CD8-positive, alpha-beta T cell (primary cell): ENCODE measurements at regions of chr16 and their contacts with region 1.

Region 1: GRCh38 chr16:68264128-68265077 is at the start of gene SLC7A6:
- DNase-seq: peak; percentile 66 to 90 (median 80)
- ATAC-seq: peak; percentile 67
- H3K4me3 ChIP-seq: peak within 1 kb of the TSS; percentile 83 to 88
- H3K4me3 Mint-ChIP-seq: peak within 1 kb of the TSS; percentile 96
- H3K27ac ChIP-seq: peak within 1 kb of the TSS; percentile 78 to 99
- H3K27ac Mint-ChIP-seq: peak within 1 kb of the TSS; percentile 99
- H3K4me1 ChIP-seq: peaks cover 54% of the 10 kb centered on the region
- H3K4me1 Mint-ChIP-seq: peaks cover 50% of the 10 kb centered on the region
- H3K27me3 ChIP-seq: no peaks in the 10 kb centered on the region
- H3K27me3 Mint-ChIP-seq: no peaks in the 10 kb centered on the region
- CTCF ChIP-seq: peak; percentile 59
- total RNA-seq, gene SLC7A6: 115 to 119 TPM

Region 2: GRCh38 chr16:68237243-68238028 is 27.0 kb before region 1 on chr16:
- CTCF ChIA-PET with region 1: interaction called, 57 read pairs
- POLR2A ChIA-PET with region 1: interaction called, 5 read pairs
- intact Hi-C with region 1: no loop called
- DNase-seq: peak; percentile 61 to 92 (median 86)
- ATAC-seq: peak; percentile 80
- H3K4me3 ChIP-seq: peak overlapping the region; percentile 67 to 93
- H3K4me3 Mint-ChIP-seq: peak overlapping the region; percentile 95
- H3K27ac ChIP-seq: peak overlapping the region; percentile 35 to 51
- H3K27ac Mint-ChIP-seq: peak overlapping the region; percentile 86
- H3K4me1 ChIP-seq: peaks cover 32% of the 10 kb centered on the region
- H3K4me1 Mint-ChIP-seq: peaks cover 32% of the 10 kb centered on the region
- H3K27me3 ChIP-seq: no peaks in the 10 kb centered on the region
- H3K27me3 Mint-ChIP-seq: no peaks in the 10 kb centered on the region
- CTCF ChIP-seq: no peak

Region 3: DNA sequence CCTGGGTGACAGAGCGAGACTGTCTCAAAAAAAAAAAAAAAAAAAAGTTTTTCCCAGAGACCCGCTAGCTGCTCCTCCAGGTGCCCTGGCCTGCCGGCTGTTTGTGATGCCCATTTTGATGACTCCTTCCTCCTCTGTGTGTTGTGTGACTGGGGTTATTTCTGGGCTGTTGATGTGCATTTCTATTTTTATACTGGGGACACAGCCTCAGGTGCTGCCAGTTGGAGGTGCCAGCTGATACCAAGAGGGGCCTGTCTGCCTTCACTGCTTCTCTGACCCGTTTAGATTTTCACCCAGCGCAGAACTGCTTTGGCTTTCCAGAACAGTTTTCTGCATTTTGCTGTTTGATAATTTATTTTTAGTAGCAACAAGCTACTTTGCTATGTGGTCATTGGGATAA is 12.6 kb before region 1 on chr16:
- CTCF ChIA-PET with region 1: interaction called, 57 read pairs
- POLR2A ChIA-PET with region 1: interaction called, 10 read pairs
- intact Hi-C with region 1: no loop called
- DNase-seq: no peak
- ATAC-seq: no peak
- H3K4me3 ChIP-seq: no peak overlapping the region
- H3K4me3 Mint-ChIP-seq: no peak overlapping the region
- H3K27ac ChIP-seq: no peak overlapping the region
- H3K27ac Mint-ChIP-seq: no peak overlapping the region
- H3K4me1 ChIP-seq: peaks cover 2% of the 10 kb centered on the region
- H3K4me1 Mint-ChIP-seq: peaks cover 2% of the 10 kb centered on the region
- H3K27me3 ChIP-seq: no peaks in the 10 kb centered on the region
- H3K27me3 Mint-ChIP-seq: no peaks in the 10 kb centered on the region
- CTCF ChIP-seq: no peak

Region 4: DNA sequence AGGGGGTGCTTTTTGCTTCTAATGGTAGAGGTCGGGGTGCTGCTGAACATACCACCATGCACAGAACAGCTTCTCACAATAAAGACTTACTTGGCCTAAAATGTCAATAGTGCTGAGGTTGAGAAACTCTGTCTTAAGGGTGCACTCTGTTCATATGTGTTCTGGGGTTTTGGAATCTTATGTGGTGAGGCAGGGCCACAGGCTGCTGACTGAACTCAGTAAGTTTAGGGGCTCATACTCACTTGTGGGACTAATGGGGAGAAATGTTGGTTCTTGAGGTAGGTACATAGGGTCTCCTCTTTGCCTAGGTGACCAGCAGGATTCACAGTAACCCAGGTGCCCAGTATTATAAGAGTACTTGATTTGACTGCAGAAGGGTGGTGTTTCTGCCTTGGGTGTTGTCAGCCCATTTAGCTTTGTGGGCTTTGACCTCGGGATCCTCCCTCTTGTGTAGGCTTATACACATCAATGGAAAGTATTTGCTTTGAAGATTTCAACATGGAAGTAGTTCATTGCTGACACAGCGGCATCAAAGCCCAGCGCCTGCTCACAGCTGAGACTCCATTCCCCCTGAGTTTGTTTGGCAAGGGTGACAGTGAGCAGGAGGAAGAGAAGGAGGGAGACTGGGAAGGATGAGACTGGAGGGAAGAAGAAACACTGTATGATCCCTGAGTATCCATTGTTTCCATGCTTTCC is 17.1 kb after region 1 on chr16:
- CTCF ChIA-PET with region 1: interaction called, 332 read pairs
- POLR2A ChIA-PET with region 1: interaction called, 88 read pairs
- intact Hi-C with region 1: loop called (anchors 2 kb)
- DNase-seq: peak in 6 of 9 experiments; percentile 25 to 64 (median 40)
- ATAC-seq: peak; percentile 51
- H3K4me3 ChIP-seq: peak overlapping the region in 1 of 2 experiments; percentile 5
- H3K4me3 Mint-ChIP-seq: peak overlapping the region; percentile 66
- H3K27ac ChIP-seq: peak overlapping the region; percentile 1 to 33
- H3K27ac Mint-ChIP-seq: peak overlapping the region; percentile 88
- H3K4me1 ChIP-seq: peaks cover 79% of the 10 kb centered on the region
- H3K4me1 Mint-ChIP-seq: peaks cover 72% of the 10 kb centered on the region
- H3K27me3 ChIP-seq: no peaks in the 10 kb centered on the region
- H3K27me3 Mint-ChIP-seq: no peaks in the 10 kb centered on the region
- CTCF ChIP-seq: no peak

Region 5: GRCh38 chr16:68298907-68299561 is 34.6 kb after region 1 on chr16:
- CTCF ChIA-PET with region 1: interaction called, 332 read pairs
- POLR2A ChIA-PET with region 1: interaction called, 5 read pairs
- intact Hi-C with region 1: no loop called
- DNase-seq: no peak
- ATAC-seq: no peak
- H3K4me3 ChIP-seq: no peak overlapping the region
- H3K4me3 Mint-ChIP-seq: no peak overlapping the region
- H3K27ac ChIP-seq: no peak overlapping the region
- H3K27ac Mint-ChIP-seq: peak overlapping the region; percentile 55
- H3K4me1 ChIP-seq: no peaks in the 10 kb centered on the region
- H3K4me1 Mint-ChIP-seq: peaks cover 29% of the 10 kb centered on the region
- H3K27me3 ChIP-seq: no peaks in the 10 kb centered on the region
- H3K27me3 Mint-ChIP-seq: no peaks in the 10 kb centered on the region
- CTCF ChIP-seq: no peak

Region 6: GRCh38 chr16:68328151-68328859 is 63.9 kb after region 1 on chr16:
- CTCF ChIA-PET with region 1: interaction called, 618 read pairs
- POLR2A ChIA-PET with region 1: interaction called, 19 read pairs
- intact Hi-C with region 1: loop called (anchors 1 kb)
- DNase-seq: peak; percentile 59 to 90 (median 77)
- ATAC-seq: peak; percentile 100
- H3K4me3 ChIP-seq: no peak overlapping the region
- H3K4me3 Mint-ChIP-seq: no peak overlapping the region
- H3K27ac ChIP-seq: no peak overlapping the region
- H3K27ac Mint-ChIP-seq: no peak overlapping the region
- H3K4me1 ChIP-seq: no peaks in the 10 kb centered on the region
- H3K4me1 Mint-ChIP-seq: peaks cover 7% of the 10 kb centered on the region
- H3K27me3 ChIP-seq: no peaks in the 10 kb centered on the region
- H3K27me3 Mint-ChIP-seq: no peaks in the 10 kb centered on the region
- CTCF ChIP-seq: peak; percentile 97

Region 7: DNA sequence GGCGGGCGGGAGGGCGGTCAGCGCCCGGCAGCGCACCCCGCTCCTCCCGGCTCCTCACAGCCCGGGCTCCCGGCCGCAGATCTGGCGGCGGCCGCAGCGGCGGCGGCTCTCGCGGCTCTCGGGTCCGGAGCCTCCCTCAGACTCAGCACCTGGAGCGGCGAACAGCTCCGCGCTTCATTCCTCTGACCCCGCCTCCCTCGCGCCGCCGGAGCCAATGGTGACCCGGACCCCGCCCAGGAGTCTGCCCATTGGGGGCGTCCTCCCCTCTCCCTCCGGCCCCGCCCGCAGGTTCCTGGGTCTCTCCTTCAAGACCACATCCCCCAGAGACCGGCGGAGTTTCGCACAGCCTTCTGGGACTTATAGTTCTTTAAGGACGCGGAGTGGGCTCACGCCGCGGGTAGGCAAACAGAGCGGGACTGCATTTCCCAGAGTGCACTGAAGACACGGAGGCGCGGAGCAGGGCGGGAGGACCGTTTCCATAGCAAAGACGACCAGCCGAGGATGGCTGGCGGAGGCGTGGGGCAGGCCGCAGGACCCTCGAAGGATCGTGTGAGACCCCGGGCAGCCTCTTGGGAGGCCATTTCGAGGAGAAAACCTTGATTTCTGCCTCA is 184.1 kb after region 1 on chr16 and contains the start of gene SMPD3:
- CTCF ChIA-PET with region 1: no interaction called
- POLR2A ChIA-PET with region 1: no interaction called
- intact Hi-C with region 1: loop called (anchors 10 kb)
- DNase-seq: peak; percentile 96 to 99 (median 98)
- ATAC-seq: peak; percentile 98
- H3K4me3 ChIP-seq: peak within 1 kb of the TSS; percentile 46 to 49
- H3K4me3 Mint-ChIP-seq: peak within 1 kb of the TSS; percentile 68
- H3K27ac ChIP-seq: peak within 1 kb of the TSS in 1 of 2 experiments; percentile 37
- H3K27ac Mint-ChIP-seq: no peak within 1 kb of the TSS
- H3K4me1 ChIP-seq: peaks cover 26% of the 10 kb centered on the region
- H3K4me1 Mint-ChIP-seq: peaks cover 21% of the 10 kb centered on the region
- H3K27me3 ChIP-seq: peaks cover 18 to 25% of the 10 kb centered on the region in 2 experiments
- H3K27me3 Mint-ChIP-seq: peaks cover 24% of the 10 kb centered on the region
- CTCF ChIP-seq: no peak
- total RNA-seq, gene SMPD3: 0.24 to 0.25 TPM